Mammary epithelial cell (primary cell): ENCODE measurements at regions of chr6 and their contacts with region 1.

Region 1: DNA sequence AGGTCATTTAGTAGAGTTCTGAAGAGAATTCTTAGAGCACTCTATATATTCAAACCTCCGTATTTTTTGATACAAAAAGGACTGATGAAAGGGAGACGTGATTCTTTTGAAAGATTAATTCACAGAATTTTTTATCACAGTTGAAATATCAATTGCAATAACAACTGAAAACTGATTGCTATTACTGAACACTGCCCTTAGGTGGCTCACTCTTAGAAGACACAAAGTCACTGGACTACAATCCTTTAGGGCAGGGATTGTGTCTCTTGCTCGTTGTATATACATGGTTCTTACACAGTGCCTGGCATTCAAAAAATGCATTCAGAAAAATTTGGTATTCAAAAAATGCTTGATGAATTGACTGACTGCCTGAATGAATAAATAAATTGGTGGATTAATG is 17.1 kb upstream of the CALHM6 start:
- DNase-seq: peak; percentile 27
- H3K4me3 ChIP-seq: no peak overlapping the region
- H3K27ac ChIP-seq: no peak overlapping the region
- H3K4me1 ChIP-seq: peaks cover 28% of the 10 kb centered on the region
- H3K27me3 ChIP-seq: no peaks in the 10 kb centered on the region
- CTCF ChIP-seq: peak; percentile 47 to 63

Region 2: GRCh38 chr6:115514656-115515055 is 929.4 kb before region 1 on chr6:
- CTCF ChIA-PET with region 1: no interaction called
- dilution Hi-C with region 1: no loop called
- in situ Hi-C with region 1: no loop called
- intact Hi-C with region 1: no loop called
- DNase-seq: no peak
- H3K4me3 ChIP-seq: no peak overlapping the region
- H3K27ac ChIP-seq: no peak overlapping the region
- H3K4me1 ChIP-seq: no peaks in the 10 kb centered on the region
- H3K27me3 ChIP-seq: no peaks in the 10 kb centered on the region
- CTCF ChIP-seq: no peak

Region 3: GRCh38 chr6:116511404-116512110 is 67.5 kb after region 1 on chr6 and contains the start of gene CALHM5:
- CTCF ChIA-PET with region 1: interaction called, 3 read pairs
- dilution Hi-C with region 1: loop called (anchors 5 kb)
- in situ Hi-C with region 1: no loop called
- intact Hi-C with region 1: loop called (anchors 2 kb)
- DNase-seq: peak; percentile 76
- H3K4me3 ChIP-seq: no peak within 1 kb of the TSS
- H3K27ac ChIP-seq: no peak within 1 kb of the TSS
- H3K4me1 ChIP-seq: peaks cover 23% of the 10 kb centered on the region
- H3K27me3 ChIP-seq: no peaks in the 10 kb centered on the region
- CTCF ChIP-seq: peak; percentile 69 to 77
- total RNA-seq, gene CALHM5: 0.05 to 0.50 TPM